Sciatic nerve (tissue), 2 donors: ENCODE measurements at regions of chr1 and their contacts with region 1.

Region 1: DNA sequence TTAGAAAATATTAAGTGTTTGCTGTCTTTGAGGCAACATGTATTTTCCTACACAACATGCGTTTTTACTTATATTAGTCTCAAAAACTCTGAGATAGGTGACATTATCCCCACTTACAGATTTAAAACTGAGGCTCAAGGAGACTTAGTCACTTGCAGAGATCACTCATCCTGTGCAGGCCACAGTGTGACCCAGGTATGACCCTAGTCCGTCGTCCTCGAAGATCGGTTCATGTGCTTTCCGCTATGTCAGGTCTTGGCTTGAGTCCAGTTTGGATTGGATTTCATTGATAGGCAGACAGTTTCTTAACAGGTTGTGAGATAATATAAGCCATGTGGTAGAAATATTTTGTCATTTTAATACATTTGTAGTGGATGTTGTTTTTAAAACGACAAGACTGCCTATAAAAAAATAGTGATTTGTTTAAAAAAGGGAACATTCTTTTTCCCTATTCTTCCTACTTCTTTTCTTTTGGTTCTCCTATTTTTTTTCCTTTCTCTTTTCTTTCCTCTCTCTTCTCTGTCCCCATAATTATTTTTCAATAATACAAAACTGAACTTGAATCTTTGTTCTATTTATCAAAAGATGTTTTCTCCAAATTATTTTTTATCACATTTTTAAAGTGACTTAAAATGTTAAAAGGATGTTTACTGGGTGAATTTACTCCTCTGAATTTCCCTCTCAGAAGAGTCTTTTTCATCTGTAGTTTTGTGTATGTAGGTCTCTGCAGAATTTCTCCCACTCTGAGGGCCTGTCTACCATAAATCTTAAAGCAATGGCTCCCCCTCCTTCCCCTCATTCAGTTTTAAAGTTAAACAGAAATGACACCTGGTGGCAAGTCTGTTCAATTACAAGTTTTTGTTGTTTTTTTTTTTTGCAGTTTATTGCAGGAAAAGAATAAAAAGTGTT is 81.8 kb downstream of the PHTF1 start:
- DNase-seq: no peak
- ATAC-seq: peak; percentile 74

Region 2: GRCh38 chr1:113140588-113141446 is 536.7 kb before region 1 on chr1:
- intact Hi-C with region 1: loop called (anchors 10 kb)
- DNase-seq: peak; percentile 74
- ATAC-seq: peak; percentile 88

Region 3: DNA sequence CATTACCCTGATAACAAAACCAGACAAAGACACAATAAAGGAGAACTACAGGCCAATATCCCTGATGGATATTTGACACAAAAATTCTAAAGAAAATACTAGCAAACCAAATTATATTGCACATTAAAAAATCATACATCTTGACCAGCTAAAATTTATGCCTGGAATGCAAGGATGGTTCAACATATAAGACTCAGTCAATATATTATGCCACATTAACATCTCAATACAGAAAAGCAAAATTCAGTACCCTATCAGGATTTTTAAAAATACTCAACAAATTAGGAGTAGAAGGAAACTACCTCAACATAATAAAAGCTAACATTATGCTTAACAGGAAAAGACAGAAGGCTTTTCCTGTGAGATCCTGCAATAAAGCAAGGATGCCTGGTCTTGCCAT is 110.1 kb before region 1 on chr1:
- intact Hi-C with region 1: no loop called
- DNase-seq: no peak
- ATAC-seq: no peak

Region 4: DNA sequence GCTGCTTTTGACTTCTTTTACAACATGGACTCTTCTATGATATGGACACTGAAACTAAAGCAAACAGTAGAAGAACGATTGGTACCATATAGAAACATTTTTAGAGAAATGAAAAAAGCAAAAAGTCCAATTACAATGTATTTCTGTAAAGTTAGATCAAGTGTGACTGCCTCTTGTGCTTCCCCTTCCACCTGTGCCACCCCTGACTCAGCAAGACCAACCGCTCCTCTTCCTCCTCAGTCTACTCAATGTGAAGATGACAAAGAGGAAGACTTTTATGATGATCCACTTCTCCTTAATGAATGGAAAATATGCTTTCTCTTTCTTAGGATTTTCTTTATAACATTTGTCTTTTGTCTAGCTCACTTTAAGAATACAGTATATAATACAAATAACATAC is 14.8 kb after region 1 on chr1:
- intact Hi-C with region 1: no loop called
- DNase-seq: no peak
- ATAC-seq: no peak

Region 5: DNA sequence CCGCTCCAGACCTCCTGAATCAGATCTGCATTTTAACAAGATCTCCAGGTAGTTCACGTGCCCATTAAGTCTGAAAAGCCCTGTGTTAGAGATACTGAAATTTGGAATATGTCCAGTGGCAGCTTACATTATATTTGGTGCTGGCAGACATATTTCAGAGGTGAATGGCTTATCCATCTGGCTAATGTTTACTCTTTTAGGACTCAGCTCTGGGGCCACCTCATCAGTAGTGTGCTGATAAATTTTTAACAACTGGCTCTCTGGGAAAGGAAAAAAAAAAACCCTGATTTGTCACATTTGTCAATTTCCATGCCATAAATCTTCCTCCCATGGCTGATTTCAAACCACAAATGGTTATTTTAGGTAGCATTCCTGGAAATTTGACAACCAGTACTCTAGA is 501.4 kb after region 1 on chr1:
- intact Hi-C with region 1: no loop called
- DNase-seq: no peak
- ATAC-seq: no peak